AG04450 (cell line): ENCODE measurements at regions of chr21 and their contacts with region 1.

Region 1: DNA sequence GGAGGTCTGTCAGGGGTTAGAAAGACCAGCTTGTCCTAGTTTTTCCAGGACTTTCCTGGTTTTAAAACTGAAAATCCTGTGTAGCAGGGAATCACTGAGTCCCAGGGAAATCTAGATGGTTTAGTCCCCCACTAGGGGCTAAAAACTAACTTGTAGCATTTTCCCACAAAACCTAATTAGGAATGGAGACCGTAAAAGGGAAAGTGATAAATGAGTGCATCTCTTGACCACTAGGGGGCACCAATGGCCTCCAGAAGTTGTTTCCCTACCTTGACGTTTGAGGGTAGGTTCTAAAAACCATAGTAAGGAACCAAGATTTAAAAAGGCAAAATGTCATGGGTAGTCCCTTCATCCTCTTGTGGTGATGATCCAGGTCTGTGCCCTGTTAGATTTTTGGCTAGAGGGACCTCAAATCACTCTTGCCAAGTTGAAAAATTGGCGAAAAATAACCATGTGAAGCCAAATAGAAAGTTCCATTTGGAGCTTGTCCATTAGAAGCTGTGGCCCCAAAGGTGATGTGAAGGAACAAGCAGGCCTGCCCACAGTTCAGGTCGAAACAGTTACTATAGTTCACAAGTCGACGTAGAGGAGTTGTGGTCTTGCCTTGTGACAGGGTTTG is 24.5 kb downstream of the CLIC6 start:
- DNase-seq: peak; percentile 39
- H3K4me3 ChIP-seq: no peak overlapping the region
- H3K27ac ChIP-seq: no peak overlapping the region
- H3K27me3 ChIP-seq: peaks cover 36% of the 10 kb centered on the region
- CTCF ChIP-seq: peak; percentile 86

Region 2: GRCh38 chr21:34553151-34553952 is 139.9 kb before region 1 on chr21:
- CTCF ChIA-PET with region 1: no interaction called
- POLR2A ChIA-PET with region 1: no interaction called
- DNase-seq: no peak
- H3K4me3 ChIP-seq: peak overlapping the region; percentile 34
- H3K27ac ChIP-seq: peak overlapping the region; percentile 84
- H3K27me3 ChIP-seq: no peaks in the 10 kb centered on the region
- CTCF ChIP-seq: no peak

Region 3: DNA sequence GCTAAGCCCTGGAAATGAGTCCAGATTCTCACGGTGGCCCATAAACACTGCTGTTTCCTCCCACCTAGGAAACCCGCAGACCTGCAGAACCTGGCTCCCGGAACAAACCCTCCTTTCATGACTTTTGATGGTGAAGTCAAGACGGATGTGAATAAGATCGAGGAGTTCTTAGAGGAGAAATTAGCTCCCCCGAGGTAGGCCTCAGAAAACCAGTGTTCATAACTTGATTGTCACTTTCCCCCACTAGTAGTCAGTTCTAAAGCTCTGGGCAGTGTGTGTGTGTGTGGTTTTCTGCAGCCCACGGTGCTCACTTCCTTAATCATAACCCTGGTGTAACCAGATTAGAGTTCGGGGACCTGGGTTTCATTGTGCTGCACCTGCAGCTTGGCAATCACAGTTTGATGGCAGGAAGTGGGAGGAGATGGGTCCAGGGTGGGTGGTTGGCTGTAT is 14.6 kb after region 1 on chr21:
- CTCF ChIA-PET with region 1: interaction called, 10 read pairs
- POLR2A ChIA-PET with region 1: no interaction called
- DNase-seq: no peak
- H3K4me3 ChIP-seq: no peak overlapping the region
- H3K27ac ChIP-seq: no peak overlapping the region
- H3K27me3 ChIP-seq: no peaks in the 10 kb centered on the region
- CTCF ChIP-seq: no peak

Region 4: DNA sequence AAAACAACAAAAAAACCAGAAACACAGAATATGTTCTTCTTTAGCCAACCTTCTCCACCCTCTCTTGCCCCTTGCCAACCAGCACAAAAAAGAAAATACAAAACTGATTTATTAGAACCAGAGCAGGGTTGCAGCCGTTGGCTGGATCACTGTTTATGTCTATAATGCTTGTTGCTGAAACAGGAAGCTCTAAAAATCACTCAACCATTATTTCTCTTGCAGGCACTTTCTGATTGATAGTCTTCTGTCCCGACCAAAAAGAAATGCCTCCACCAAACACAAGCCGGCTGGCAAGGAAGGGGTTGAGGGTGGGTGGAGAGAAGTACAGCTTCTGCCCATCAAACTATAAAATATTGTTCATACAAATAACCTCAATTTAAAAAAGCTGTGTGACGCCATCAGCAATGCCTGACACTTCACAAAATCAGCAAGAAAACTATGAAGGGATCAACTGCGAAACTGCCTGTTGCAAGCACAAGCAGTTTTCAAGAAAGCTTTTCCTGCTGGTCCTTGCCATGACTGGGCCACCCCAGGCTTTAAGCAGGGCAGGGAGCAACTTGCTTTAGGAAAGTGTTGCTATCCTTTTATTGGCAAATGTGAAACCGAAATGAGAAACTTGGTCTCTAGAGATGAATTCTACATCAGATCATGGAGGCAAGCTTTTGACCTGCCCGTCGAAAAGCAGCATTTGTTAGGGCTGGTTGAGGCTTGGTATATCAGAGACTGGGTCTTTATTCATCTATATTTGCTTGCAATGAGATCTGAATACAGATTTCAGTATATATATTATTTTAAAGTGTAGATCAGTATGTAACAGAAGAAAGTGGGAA is 181.6 kb after region 1 on chr21:
- CTCF ChIA-PET with region 1: interaction called, 10 read pairs
- POLR2A ChIA-PET with region 1: no interaction called
- DNase-seq: no peak
- H3K4me3 ChIP-seq: no peak overlapping the region
- H3K27ac ChIP-seq: peak overlapping the region; percentile 25
- H3K27me3 ChIP-seq: no peaks in the 10 kb centered on the region
- CTCF ChIP-seq: no peak

Region 5: GRCh38 chr21:34900376-34900775 is 207.1 kb after region 1 on chr21:
- CTCF ChIA-PET with region 1: no interaction called
- POLR2A ChIA-PET with region 1: no interaction called
- DNase-seq: no peak
- H3K4me3 ChIP-seq: no peak overlapping the region
- H3K27ac ChIP-seq: no peak overlapping the region
- H3K27me3 ChIP-seq: no peaks in the 10 kb centered on the region
- CTCF ChIP-seq: no peak